ENCODE measurements at regions of chr3 and their contacts with region 1.

Region 1: GRCh38 chr3:149180057-149180573 is 41.5 kb downstream of the CP start:
- DNase-seq: peak; percentile 98
- ATAC-seq: peak; percentile 98
- H3K4me3 ChIP-seq: no peak overlapping the region
- H3K27ac ChIP-seq: peak overlapping the region; percentile 78
- H3K4me1 ChIP-seq: peaks cover 19% of the 10 kb centered on the region
- H3K27me3 ChIP-seq: no peaks in the 10 kb centered on the region
- CTCF ChIP-seq: no peak

Region 2: GRCh38 chr3:148582126-148582525 is 598.0 kb before region 1 on chr3:
- CTCF ChIA-PET with region 1: no interaction called
- POLR2A ChIA-PET with region 1: no interaction called
- in situ Hi-C with region 1: no loop called
- intact Hi-C with region 1: no loop called
- DNase-seq: no peak
- ATAC-seq: no peak
- H3K4me3 ChIP-seq: no peak overlapping the region
- H3K27ac ChIP-seq: no peak overlapping the region
- H3K4me1 ChIP-seq: no peaks in the 10 kb centered on the region
- H3K27me3 ChIP-seq: no peaks in the 10 kb centered on the region
- CTCF ChIP-seq: no peak

Region 3: DNA sequence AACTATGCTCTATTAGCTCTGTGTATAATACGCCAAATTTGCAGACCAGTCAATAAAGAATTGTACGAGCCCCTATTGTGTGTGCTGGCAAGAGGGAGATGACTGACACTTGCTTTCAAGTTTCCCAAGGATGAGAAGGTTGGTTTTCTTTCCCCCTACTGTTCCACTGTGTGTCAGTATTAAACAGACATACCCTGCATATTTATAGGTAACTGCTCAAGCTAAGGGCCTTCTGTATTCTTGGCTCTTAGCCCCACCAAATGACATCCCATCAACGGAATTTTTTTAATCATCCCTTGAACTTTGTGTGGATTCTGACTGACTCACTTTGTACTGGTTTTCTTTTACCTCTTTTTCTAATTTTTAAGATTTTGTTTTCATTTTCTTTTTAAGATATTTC is 249.4 kb before region 1 on chr3:
- CTCF ChIA-PET with region 1: no interaction called
- POLR2A ChIA-PET with region 1: no interaction called
- in situ Hi-C with region 1: no loop called
- intact Hi-C with region 1: no loop called
- DNase-seq: no peak
- ATAC-seq: no peak
- H3K4me3 ChIP-seq: no peak overlapping the region
- H3K27ac ChIP-seq: no peak overlapping the region
- H3K4me1 ChIP-seq: no peaks in the 10 kb centered on the region
- H3K27me3 ChIP-seq: peaks cover 27% of the 10 kb centered on the region
- CTCF ChIP-seq: no peak

Region 4: GRCh38 chr3:149023951-149024350 is 156.2 kb before region 1 on chr3:
- CTCF ChIA-PET with region 1: no interaction called
- POLR2A ChIA-PET with region 1: no interaction called
- in situ Hi-C with region 1: no loop called
- intact Hi-C with region 1: no loop called
- DNase-seq: no peak
- ATAC-seq: no peak
- H3K4me3 ChIP-seq: no peak overlapping the region
- H3K27ac ChIP-seq: no peak overlapping the region
- H3K4me1 ChIP-seq: no peaks in the 10 kb centered on the region
- H3K27me3 ChIP-seq: no peaks in the 10 kb centered on the region
- CTCF ChIP-seq: no peak

Region 5: DNA sequence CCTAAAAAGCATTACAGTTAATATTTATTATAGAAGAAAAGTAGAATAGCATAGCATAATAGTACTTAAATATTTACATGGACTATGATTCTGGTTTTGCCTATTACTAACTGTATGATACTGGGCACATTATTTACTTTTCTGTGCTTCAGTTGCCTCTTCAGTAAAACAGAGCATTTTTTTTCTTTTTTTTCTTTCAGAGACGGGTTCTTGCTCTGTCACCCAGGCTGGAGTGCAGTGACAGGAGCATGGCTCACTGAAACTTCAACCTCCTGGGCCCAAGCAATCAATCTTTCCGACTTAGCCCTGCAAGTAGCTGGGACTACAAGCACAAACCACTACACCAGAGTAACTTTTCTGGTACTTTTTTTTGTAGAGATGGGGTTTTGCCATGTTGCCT is 141.8 kb before region 1 on chr3:
- CTCF ChIA-PET with region 1: no interaction called
- POLR2A ChIA-PET with region 1: no interaction called
- in situ Hi-C with region 1: no loop called
- intact Hi-C with region 1: no loop called
- DNase-seq: no peak
- ATAC-seq: no peak
- H3K4me3 ChIP-seq: no peak overlapping the region
- H3K27ac ChIP-seq: no peak overlapping the region
- H3K4me1 ChIP-seq: no peaks in the 10 kb centered on the region
- H3K27me3 ChIP-seq: no peaks in the 10 kb centered on the region
- CTCF ChIP-seq: no peak

Region 6: DNA sequence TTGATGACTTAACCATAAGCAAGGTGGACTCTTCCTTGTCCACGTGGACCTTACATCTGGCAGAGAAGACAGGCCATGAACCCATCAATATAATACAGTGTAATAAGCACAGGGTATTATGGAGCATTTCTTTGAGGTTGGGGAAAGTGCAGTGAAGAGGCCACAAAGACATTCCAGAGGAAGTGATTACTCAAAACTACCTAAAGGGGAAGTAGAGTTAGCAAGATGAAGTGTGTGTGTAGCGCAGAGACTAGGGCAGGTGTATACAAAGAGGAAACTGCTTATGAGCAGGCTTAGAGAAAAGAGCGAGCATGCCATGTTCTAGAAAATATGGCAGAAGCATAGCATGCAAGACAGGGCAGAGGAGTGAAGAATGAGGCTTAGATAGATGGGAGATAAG is 23.6 kb after region 1 on chr3:
- CTCF ChIA-PET with region 1: no interaction called
- POLR2A ChIA-PET with region 1: interaction called, 19 read pairs
- in situ Hi-C with region 1: no loop called
- intact Hi-C with region 1: no loop called
- DNase-seq: no peak
- ATAC-seq: no peak
- H3K4me3 ChIP-seq: no peak overlapping the region
- H3K27ac ChIP-seq: no peak overlapping the region; the same call in 1 of the 2 replicates
- H3K4me1 ChIP-seq: peaks cover 11% of the 10 kb centered on the region
- H3K27me3 ChIP-seq: no peaks in the 10 kb centered on the region
- CTCF ChIP-seq: no peak

Region 7: GRCh38 chr3:149258298-149258697 is 78.2 kb after region 1 on chr3:
- CTCF ChIA-PET with region 1: no interaction called
- POLR2A ChIA-PET with region 1: no interaction called
- in situ Hi-C with region 1: no loop called
- intact Hi-C with region 1: loop called (anchors 5 kb)
- DNase-seq: no peak
- ATAC-seq: no peak
- H3K4me3 ChIP-seq: no peak overlapping the region
- H3K27ac ChIP-seq: peak overlapping the region; percentile 32; the same call in 1 of the 2 replicates
- H3K4me1 ChIP-seq: no peaks in the 10 kb centered on the region
- H3K27me3 ChIP-seq: no peaks in the 10 kb centered on the region
- CTCF ChIP-seq: no peak

Measured in Panc1 (cell line).